ENCODE measurements at regions of chr1 and their contacts with region 1.

Region 1: GRCh38 chr1:9194016-9194415 is 40.6 kb upstream of the H6PD start:
- DNase-seq: no peak
- H3K4me3 ChIP-seq: no peak overlapping the region
- H3K27ac ChIP-seq: no peak overlapping the region
- H3K4me1 ChIP-seq: peaks cover 8 to 32% (median 19%) of the 10 kb centered on the region in 3 donors
- H3K27me3 ChIP-seq: peaks cover 0 to 24% (median 0%) of the 10 kb centered on the region in 4 donors
- CTCF ChIP-seq: no peak
- POLR2A ChIP-seq: no peak

Region 2: GRCh38 chr1:8643542-8644536 is 550.2 kb before region 1 on chr1:
- intact Hi-C with region 1: no loop called
- DNase-seq: no peak
- H3K4me3 ChIP-seq: no peak overlapping the region
- H3K27ac ChIP-seq: no peak overlapping the region
- H3K4me1 ChIP-seq: peaks cover 0 to 11% (median 5%) of the 10 kb centered on the region in 3 donors
- H3K27me3 ChIP-seq: no peaks in the 10 kb centered on the region
- CTCF ChIP-seq: no peak
- POLR2A ChIP-seq: no peak

Region 3: GRCh38 chr1:9110669-9111356 is 83.2 kb before region 1 on chr1:
- intact Hi-C with region 1: no loop called
- DNase-seq: peak; percentile 26
- H3K4me3 ChIP-seq: no peak overlapping the region
- H3K27ac ChIP-seq: peak overlapping the region; percentile 35 to 54 (median 48)
- H3K4me1 ChIP-seq: peaks cover 12 to 73% (median 44%) of the 10 kb centered on the region in 3 donors
- H3K27me3 ChIP-seq: no peaks in the 10 kb centered on the region
- CTCF ChIP-seq: peak; percentile 86 to 97 (median 95)
- POLR2A ChIP-seq: no peak

Region 4: GRCh38 chr1:9143250-9143649 is 50.8 kb before region 1 on chr1:
- intact Hi-C with region 1: loop called (anchors 5 kb)
- DNase-seq: no peak
- H3K4me3 ChIP-seq: no peak overlapping the region
- H3K27ac ChIP-seq: no peak overlapping the region
- H3K4me1 ChIP-seq: peaks cover 0 to 5% (median 0%) of the 10 kb centered on the region in 3 donors
- H3K27me3 ChIP-seq: no peaks in the 10 kb centered on the region
- CTCF ChIP-seq: no peak
- POLR2A ChIP-seq: no peak

Measured in esophagus squamous epithelium (tissue), 5 donors.